ENCODE measurements at regions of chr12 and their contacts with region 1.

Region 1: GRCh38 chr12:51938726-51939125 is 12.8 kb upstream of the ACVR1B start:
- DNase-seq: no peak
- H3K4me3 ChIP-seq: no peak overlapping the region
- H3K27ac ChIP-seq: no peak overlapping the region
- H3K4me1 ChIP-seq: no peaks in the 10 kb centered on the region
- H3K27me3 ChIP-seq: peaks cover 63% of the 10 kb centered on the region
- CTCF ChIP-seq: no peak

Region 2: DNA sequence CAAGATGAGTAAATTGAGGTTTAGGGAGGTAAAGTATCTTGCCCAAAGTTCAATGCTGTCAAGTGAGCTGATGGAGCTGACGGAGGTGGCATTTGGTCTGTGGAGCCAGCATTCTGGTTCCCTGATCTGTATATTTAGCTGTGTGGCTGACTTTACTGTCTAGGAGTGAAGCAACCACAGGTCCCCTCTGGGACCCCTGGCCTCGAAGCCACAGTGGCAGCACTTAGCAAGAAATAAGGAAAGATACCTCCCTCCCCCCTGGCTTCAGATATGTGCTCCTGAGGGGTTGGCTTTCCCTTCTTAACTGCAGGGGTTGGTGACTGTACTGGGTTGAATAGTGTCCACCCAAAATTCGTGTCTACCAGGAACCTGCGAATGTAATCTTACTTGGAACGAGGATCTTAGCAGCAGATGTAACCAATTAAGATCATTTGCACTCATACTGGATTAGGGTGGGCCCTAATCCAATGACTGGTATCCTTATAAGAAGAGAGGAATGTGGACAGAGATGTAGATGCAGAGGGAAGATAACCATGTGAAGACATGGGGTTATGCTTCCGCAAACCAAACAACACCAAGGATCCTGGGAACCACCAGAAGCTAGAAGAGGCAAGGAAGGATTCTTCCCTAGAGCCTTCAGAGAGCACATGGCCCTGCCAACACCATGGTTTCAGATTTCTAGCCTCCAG is 10.8 kb after region 1 on chr12:
- CTCF ChIA-PET with region 1: no interaction called
- POLR2A ChIA-PET with region 1: no interaction called
- intact Hi-C with region 1: loop called (anchors 1 kb)
- DNase-seq: no peak
- H3K4me3 ChIP-seq: no peak overlapping the region
- H3K27ac ChIP-seq: no peak overlapping the region
- H3K4me1 ChIP-seq: peaks cover 22% of the 10 kb centered on the region
- H3K27me3 ChIP-seq: peaks cover 44% of the 10 kb centered on the region
- CTCF ChIP-seq: no peak

Measured in PC-9 (cell line).